ENCODE measurements at regions of chr6 and their contacts with region 1.

Region 1: DNA sequence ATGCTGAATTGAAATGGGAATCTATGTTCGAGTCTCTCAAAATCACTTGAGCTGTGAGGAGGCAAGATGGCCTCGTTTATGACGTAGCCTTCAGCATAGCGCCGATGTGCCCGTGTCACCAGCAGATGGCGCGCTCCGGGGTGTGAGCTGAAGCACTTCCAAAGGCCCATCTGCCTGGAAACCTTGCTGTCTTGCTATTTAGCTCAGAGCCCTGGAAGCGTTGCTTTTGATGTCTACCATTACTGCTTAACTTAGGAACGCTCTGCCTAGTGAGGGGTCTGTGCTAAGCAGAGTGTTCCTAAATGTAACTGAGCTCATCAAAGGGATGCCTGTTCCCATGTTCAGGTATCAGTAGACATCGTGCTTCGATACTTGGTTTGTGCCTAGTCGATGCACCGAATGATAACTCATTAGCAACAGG is 67.7 kb downstream of the SYCP2L start:
- DNase-seq: peak; percentile 78 to 85
- H3K4me3 ChIP-seq: no peak overlapping the region
- H3K4me3 Mint-ChIP-seq: no peak overlapping the region
- H3K27ac Mint-ChIP-seq: no peak overlapping the region
- H3K4me1 ChIP-seq: peaks cover 7% of the 10 kb centered on the region
- H3K4me1 Mint-ChIP-seq: peaks cover 5% of the 10 kb centered on the region
- H3K27me3 ChIP-seq: no peaks in the 10 kb centered on the region
- H3K27me3 Mint-ChIP-seq: no peaks in the 10 kb centered on the region
- CTCF ChIP-seq: peak; percentile 66 to 72

Region 2: DNA sequence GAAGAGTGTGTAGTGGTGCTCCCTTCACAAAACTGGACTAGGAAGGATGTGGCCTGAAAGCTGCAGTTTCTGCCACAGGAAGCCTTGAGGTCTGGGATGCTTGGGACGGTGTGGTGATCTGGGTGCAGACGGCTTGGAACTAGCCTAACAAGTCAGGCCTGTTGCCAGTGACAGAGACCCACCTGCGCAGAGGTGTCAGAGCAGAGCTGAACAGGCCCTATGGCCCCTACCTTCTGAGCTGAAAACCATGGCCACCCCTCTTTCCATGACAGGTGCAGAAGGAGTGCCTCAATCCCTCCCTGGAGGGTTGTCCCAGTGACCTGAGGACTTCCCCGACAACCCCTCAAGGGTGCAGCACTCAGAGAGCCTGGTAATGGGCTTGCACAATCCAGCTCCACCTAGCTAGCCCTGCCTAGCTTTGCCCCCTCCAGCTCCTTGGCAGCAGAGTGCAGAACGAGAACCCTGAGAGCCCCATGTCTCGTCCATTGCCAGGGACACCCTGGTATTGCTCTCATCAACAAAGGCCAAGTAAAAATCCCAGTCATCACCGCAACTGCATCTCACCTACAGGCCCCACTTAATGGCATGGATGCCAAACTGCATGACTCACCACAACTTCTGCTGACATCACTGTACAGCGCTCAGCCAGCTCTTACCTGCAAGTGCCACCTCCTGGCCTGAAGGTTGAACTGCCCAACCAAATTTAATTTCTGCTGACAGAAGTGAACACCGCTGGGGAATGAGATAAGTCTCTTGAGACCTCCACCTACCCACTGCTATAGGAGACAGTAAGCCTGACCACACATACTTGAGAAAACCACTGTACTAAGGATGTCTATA is 1102.8 kb before region 1 on chr6:
- CTCF ChIA-PET with region 1: no interaction called
- POLR2A ChIA-PET with region 1: no interaction called
- intact Hi-C with region 1: no loop called
- DNase-seq: peak; percentile 36 to 39
- H3K4me3 ChIP-seq: no peak overlapping the region
- H3K4me3 Mint-ChIP-seq: no peak overlapping the region
- H3K27ac Mint-ChIP-seq: no peak overlapping the region
- H3K4me1 ChIP-seq: no peaks in the 10 kb centered on the region
- H3K4me1 Mint-ChIP-seq: no peaks in the 10 kb centered on the region
- H3K27me3 ChIP-seq: no peaks in the 10 kb centered on the region
- H3K27me3 Mint-ChIP-seq: no peaks in the 10 kb centered on the region
- CTCF ChIP-seq: no peak

Region 3: GRCh38 chr6:11011787-11012234 is 57.2 kb after region 1 on chr6:
- CTCF ChIA-PET with region 1: interaction called, 16 read pairs
- POLR2A ChIA-PET with region 1: no interaction called
- intact Hi-C with region 1: loop called (anchors 1 kb)
- DNase-seq: peak; percentile 72 to 73
- H3K4me3 ChIP-seq: no peak overlapping the region
- H3K4me3 Mint-ChIP-seq: peak overlapping the region; percentile 51
- H3K27ac Mint-ChIP-seq: no peak overlapping the region
- H3K4me1 ChIP-seq: peaks cover 58% of the 10 kb centered on the region
- H3K4me1 Mint-ChIP-seq: peaks cover 53% of the 10 kb centered on the region
- H3K27me3 ChIP-seq: no peaks in the 10 kb centered on the region
- H3K27me3 Mint-ChIP-seq: no peaks in the 10 kb centered on the region
- CTCF ChIP-seq: peak in 1 of 2 experiments; percentile 47

Region 4: GRCh38 chr6:11064836-11065235 is 110.2 kb after region 1 on chr6:
- CTCF ChIA-PET with region 1: interaction called, 80 read pairs
- POLR2A ChIA-PET with region 1: interaction called, 3 read pairs
- intact Hi-C with region 1: loop called (anchors 1 kb)
- DNase-seq: no peak
- H3K4me3 ChIP-seq: no peak overlapping the region
- H3K4me3 Mint-ChIP-seq: no peak overlapping the region
- H3K27ac Mint-ChIP-seq: no peak overlapping the region
- H3K4me1 ChIP-seq: peaks cover 36% of the 10 kb centered on the region
- H3K4me1 Mint-ChIP-seq: peaks cover 32% of the 10 kb centered on the region
- H3K27me3 ChIP-seq: no peaks in the 10 kb centered on the region
- H3K27me3 Mint-ChIP-seq: no peaks in the 10 kb centered on the region
- CTCF ChIP-seq: no peak

Region 5: DNA sequence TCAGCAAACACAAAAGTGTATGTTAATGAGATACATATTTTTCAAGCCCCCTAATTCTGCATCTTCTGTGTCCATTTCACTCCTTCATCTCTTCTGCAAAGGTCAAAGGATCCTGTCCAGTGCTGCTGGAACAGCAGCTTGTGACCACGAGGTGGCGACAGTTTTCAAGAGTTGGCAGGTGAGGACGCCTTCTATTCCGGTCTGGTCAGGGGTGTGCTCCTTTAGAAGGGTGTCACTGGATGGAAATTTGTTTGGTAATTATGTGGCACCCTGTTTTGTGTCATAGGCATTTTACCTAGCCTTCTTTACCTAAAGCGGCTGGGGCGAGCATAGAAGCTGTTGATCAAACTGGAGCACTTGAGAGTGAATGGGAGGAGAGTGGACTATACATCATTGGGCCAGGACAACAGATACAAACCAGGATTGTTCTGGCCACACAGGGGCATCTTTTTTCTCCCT is 189.8 kb after region 1 on chr6:
- CTCF ChIA-PET with region 1: no interaction called
- POLR2A ChIA-PET with region 1: no interaction called
- intact Hi-C with region 1: loop called (anchors 5 kb)
- DNase-seq: peak; percentile 76 to 83
- H3K4me3 ChIP-seq: no peak overlapping the region
- H3K4me3 Mint-ChIP-seq: no peak overlapping the region
- H3K27ac Mint-ChIP-seq: peak overlapping the region; percentile 31
- H3K4me1 ChIP-seq: peaks cover 10% of the 10 kb centered on the region; the same call in 1 of the 2 replicates
- H3K4me1 Mint-ChIP-seq: peaks cover 19% of the 10 kb centered on the region
- H3K27me3 ChIP-seq: no peaks in the 10 kb centered on the region
- H3K27me3 Mint-ChIP-seq: no peaks in the 10 kb centered on the region
- CTCF ChIP-seq: peak; percentile 93 to 94

Region 6: DNA sequence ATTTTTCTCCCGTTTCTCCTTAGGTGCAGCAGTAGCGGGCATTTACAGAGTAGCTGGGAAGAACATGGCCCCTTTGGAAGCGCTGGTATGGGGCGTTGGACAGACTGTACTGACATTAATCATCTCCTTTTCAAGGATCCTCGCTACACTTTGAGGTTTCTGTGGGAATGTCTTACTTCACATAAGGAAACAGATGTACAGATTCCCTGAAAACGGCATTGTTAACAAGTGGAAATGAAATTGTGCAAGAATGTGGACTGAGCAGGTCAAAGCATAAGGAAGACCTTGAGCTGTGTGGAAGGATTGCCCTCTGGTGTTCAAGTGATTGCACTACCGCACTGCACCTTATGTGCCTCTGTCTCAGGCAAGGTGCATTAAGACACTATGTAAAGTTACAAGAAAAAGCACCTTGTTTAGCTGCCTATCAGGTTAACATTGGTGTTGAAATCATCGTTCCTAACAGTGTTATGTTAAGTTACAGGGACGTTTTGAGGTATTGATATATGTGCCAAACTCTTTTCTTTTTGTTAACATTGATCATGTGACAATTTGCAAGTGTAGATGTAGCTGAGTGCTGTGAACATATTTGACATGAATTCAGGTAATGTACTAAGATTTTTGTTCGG is 620.9 kb after region 1 on chr6:
- CTCF ChIA-PET with region 1: interaction called, 7 read pairs
- POLR2A ChIA-PET with region 1: no interaction called
- intact Hi-C with region 1: loop called (anchors 1 kb)
- DNase-seq: peak; percentile 73 to 76
- H3K4me3 ChIP-seq: peak overlapping the region; percentile 30
- H3K4me3 Mint-ChIP-seq: peak overlapping the region; percentile 64
- H3K27ac Mint-ChIP-seq: peak overlapping the region; percentile 24
- H3K4me1 ChIP-seq: no peaks in the 10 kb centered on the region
- H3K4me1 Mint-ChIP-seq: peaks cover 7% of the 10 kb centered on the region
- H3K27me3 ChIP-seq: no peaks in the 10 kb centered on the region
- H3K27me3 Mint-ChIP-seq: no peaks in the 10 kb centered on the region
- CTCF ChIP-seq: peak; percentile 85 to 91